ENCODE measurements at regions of chr5 and their contacts with region 1.

Region 1: GRCh38 chr5:40688127-40688761 is 8.5 kb downstream of the PTGER4 start:
- DNase-seq: peak; percentile 81 to 88 (median 84)
- H3K4me3 ChIP-seq: peak overlapping the region in 1 of 2 donors; percentile 46
- H3K4me3 Mint-ChIP-seq: peak overlapping the region; percentile 92 to 100 (median 99)
- H3K27ac ChIP-seq: peak overlapping the region; percentile 59
- H3K27ac Mint-ChIP-seq: peak overlapping the region; percentile 91 to 98 (median 95)
- H3K4me1 ChIP-seq: peaks cover 81% of the 10 kb centered on the region
- H3K4me1 Mint-ChIP-seq: peaks cover 51 to 89% (median 73%) of the 10 kb centered on the region in 4 donors
- H3K27me3 ChIP-seq: no peaks in the 10 kb centered on the region
- H3K27me3 Mint-ChIP-seq: no peaks in the 10 kb centered on the region

Region 2: DNA sequence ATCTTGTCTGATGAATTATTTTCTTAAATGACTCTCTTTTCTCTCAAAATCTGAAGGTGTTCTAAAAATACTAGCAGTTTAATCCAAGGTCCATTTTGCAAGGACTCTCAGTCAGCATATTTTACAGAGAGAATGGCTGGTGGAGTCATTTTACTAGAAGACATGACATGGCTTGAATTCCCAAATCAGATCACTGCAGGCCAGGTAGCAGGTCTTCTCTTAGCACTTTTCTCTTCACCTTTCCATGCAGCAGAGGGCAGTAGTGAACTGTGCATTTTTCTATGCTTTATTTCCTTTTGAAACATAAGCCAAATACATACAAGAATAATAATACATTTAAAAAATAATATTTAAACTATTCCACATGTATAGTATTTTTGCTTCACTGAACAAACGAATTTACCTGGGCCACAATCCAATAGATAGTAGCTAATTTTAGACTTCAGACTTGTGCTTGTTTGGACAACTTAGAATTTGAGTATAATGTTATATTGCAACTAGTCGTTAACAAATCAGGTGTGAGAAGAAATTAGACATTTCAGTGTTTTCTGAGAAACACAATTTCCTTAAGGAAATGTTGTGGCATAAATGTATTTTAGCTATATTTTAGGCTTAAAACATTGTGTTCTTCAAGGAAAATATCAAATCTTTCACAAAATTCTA is 974.1 kb before region 1 on chr5:
- CTCF ChIA-PET with region 1: interaction called, 10 read pairs
- POLR2A ChIA-PET with region 1: no interaction called
- intact Hi-C with region 1: loop called (anchors 1 kb)
- DNase-seq: peak in 4 of 5 donors; percentile 38 to 47 (median 43)
- H3K4me3 ChIP-seq: no peak overlapping the region
- H3K4me3 Mint-ChIP-seq: no peak overlapping the region
- H3K27ac ChIP-seq: no peak overlapping the region
- H3K27ac Mint-ChIP-seq: no peak overlapping the region
- H3K4me1 ChIP-seq: no peaks in the 10 kb centered on the region
- H3K4me1 Mint-ChIP-seq: no peaks in the 10 kb centered on the region
- H3K27me3 ChIP-seq: no peaks in the 10 kb centered on the region
- H3K27me3 Mint-ChIP-seq: peaks cover 0 to 2% of the 10 kb centered on the region in 2 donors

Region 3: GRCh38 chr5:40165794-40166728 is 522.2 kb before region 1 on chr5:
- CTCF ChIA-PET with region 1: interaction called, 9 read pairs
- POLR2A ChIA-PET with region 1: no interaction called
- intact Hi-C with region 1: loop called (anchors 1 kb)
- DNase-seq: peak in 4 of 5 donors; percentile 13 to 33 (median 16)
- H3K4me3 ChIP-seq: no peak overlapping the region
- H3K4me3 Mint-ChIP-seq: no peak overlapping the region
- H3K27ac ChIP-seq: no peak overlapping the region
- H3K27ac Mint-ChIP-seq: no peak overlapping the region
- H3K4me1 ChIP-seq: no peaks in the 10 kb centered on the region
- H3K4me1 Mint-ChIP-seq: peaks cover 0 to 1% (median 0%) of the 10 kb centered on the region in 4 donors
- H3K27me3 ChIP-seq: no peaks in the 10 kb centered on the region
- H3K27me3 Mint-ChIP-seq: no peaks in the 10 kb centered on the region

Region 4: GRCh38 chr5:40391642-40392041 is 296.6 kb before region 1 on chr5:
- CTCF ChIA-PET with region 1: interaction called, 18 read pairs
- POLR2A ChIA-PET with region 1: interaction called, 15 read pairs
- intact Hi-C with region 1: loop called (anchors 1 kb)
- DNase-seq: no peak
- H3K4me3 ChIP-seq: no peak overlapping the region
- H3K4me3 Mint-ChIP-seq: peak overlapping the region in 1 of 8 donors; percentile 6
- H3K27ac ChIP-seq: no peak overlapping the region
- H3K27ac Mint-ChIP-seq: peak overlapping the region in 5 of 7 donors; percentile 17 to 79 (median 63)
- H3K4me1 ChIP-seq: peaks cover 52% of the 10 kb centered on the region
- H3K4me1 Mint-ChIP-seq: peaks cover 42 to 58% (median 46%) of the 10 kb centered on the region in 4 donors
- H3K27me3 ChIP-seq: no peaks in the 10 kb centered on the region
- H3K27me3 Mint-ChIP-seq: no peaks in the 10 kb centered on the region

Region 5: DNA sequence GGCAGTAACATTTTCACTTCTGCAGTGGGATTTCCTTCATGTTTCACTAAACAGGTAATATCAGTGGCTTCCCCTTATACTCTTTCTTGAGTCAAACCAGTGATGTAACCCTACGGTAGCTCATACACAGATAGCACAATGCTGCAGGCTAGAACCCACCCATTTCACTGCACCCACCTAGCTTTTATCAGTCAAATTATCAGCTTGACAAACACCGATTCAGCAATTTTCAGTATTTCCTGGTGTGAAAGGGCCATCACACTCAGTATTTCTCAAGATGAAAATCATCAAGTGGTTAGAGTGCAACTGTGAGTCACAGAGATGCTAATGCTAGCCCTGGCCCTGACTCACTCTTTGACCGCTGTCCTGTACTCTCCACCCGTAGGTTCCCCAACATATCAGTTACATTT is 250.8 kb before region 1 on chr5:
- CTCF ChIA-PET with region 1: interaction called, 15 read pairs
- POLR2A ChIA-PET with region 1: interaction called, 19 read pairs
- intact Hi-C with region 1: loop called (anchors 2 kb)
- DNase-seq: peak in 4 of 5 donors; percentile 10 to 63 (median 22)
- H3K4me3 ChIP-seq: peak overlapping the region in 1 of 2 donors; percentile 17
- H3K4me3 Mint-ChIP-seq: peak overlapping the region in 5 of 8 donors; percentile 5 to 73 (median 58)
- H3K27ac ChIP-seq: peak overlapping the region; percentile 67
- H3K27ac Mint-ChIP-seq: peak overlapping the region; percentile 82 to 97 (median 94)
- H3K4me1 ChIP-seq: peaks cover 48% of the 10 kb centered on the region
- H3K4me1 Mint-ChIP-seq: peaks cover 51 to 76% (median 63%) of the 10 kb centered on the region in 4 donors
- H3K27me3 ChIP-seq: no peaks in the 10 kb centered on the region
- H3K27me3 Mint-ChIP-seq: no peaks in the 10 kb centered on the region

Region 6: DNA sequence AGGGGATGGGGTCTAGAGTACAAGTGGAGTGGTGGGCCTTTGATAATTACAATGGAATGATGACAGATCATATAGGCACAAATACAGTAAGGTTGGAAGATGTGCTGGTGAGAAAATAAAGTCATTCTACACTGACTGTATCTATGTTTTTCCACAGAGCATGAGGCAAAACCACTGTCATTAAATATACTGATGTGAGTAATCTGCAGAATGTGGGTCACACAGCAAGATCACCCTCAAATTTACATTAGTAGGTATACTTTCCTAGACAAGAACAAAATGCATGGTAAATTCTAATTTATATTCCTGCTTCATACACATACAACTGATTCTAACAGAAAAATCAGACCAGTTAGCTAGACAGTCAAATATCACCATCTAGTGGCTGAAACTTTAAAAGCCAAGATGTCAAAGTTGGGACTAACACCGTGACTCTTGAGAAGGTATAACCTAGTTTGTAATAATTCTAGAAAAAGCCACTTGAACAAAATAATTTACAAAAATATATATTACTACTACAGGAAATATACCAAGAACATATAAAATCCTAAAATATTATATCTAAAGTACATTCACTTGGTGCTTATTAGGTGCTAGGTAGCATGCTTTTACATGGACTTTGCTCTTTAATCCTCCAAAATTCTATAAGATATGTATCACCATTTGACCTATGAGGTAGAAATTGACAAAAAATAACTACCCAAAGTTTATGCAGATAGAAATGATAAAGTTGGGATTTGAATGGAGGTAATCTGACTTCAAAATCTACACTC is 48.0 kb after region 1 on chr5:
- CTCF ChIA-PET with region 1: interaction called, 12 read pairs
- POLR2A ChIA-PET with region 1: no interaction called
- intact Hi-C with region 1: loop called (anchors 1 kb)
- DNase-seq: peak in 4 of 5 donors; percentile 51 to 62 (median 57)
- H3K4me3 ChIP-seq: no peak overlapping the region
- H3K4me3 Mint-ChIP-seq: no peak overlapping the region
- H3K27ac ChIP-seq: no peak overlapping the region
- H3K27ac Mint-ChIP-seq: peak overlapping the region in 3 of 7 donors; percentile 23 to 65 (median 24)
- H3K4me1 ChIP-seq: no peaks in the 10 kb centered on the region
- H3K4me1 Mint-ChIP-seq: peaks cover 11 to 20% (median 17%) of the 10 kb centered on the region in 4 donors
- H3K27me3 ChIP-seq: no peaks in the 10 kb centered on the region
- H3K27me3 Mint-ChIP-seq: no peaks in the 10 kb centered on the region

Region 7: GRCh38 chr5:40774623-40775022 is 86.4 kb after region 1 on chr5:
- CTCF ChIA-PET with region 1: no interaction called
- POLR2A ChIA-PET with region 1: no interaction called
- intact Hi-C with region 1: no loop called
- DNase-seq: no peak
- H3K4me3 ChIP-seq: no peak overlapping the region
- H3K4me3 Mint-ChIP-seq: no peak overlapping the region
- H3K27ac ChIP-seq: no peak overlapping the region
- H3K27ac Mint-ChIP-seq: peak overlapping the region in 2 of 7 donors; percentile 1 to 13
- H3K4me1 ChIP-seq: no peaks in the 10 kb centered on the region
- H3K4me1 Mint-ChIP-seq: peaks cover 6 to 18% (median 13%) of the 10 kb centered on the region in 4 donors
- H3K27me3 ChIP-seq: no peaks in the 10 kb centered on the region
- H3K27me3 Mint-ChIP-seq: no peaks in the 10 kb centered on the region

Region 8: DNA sequence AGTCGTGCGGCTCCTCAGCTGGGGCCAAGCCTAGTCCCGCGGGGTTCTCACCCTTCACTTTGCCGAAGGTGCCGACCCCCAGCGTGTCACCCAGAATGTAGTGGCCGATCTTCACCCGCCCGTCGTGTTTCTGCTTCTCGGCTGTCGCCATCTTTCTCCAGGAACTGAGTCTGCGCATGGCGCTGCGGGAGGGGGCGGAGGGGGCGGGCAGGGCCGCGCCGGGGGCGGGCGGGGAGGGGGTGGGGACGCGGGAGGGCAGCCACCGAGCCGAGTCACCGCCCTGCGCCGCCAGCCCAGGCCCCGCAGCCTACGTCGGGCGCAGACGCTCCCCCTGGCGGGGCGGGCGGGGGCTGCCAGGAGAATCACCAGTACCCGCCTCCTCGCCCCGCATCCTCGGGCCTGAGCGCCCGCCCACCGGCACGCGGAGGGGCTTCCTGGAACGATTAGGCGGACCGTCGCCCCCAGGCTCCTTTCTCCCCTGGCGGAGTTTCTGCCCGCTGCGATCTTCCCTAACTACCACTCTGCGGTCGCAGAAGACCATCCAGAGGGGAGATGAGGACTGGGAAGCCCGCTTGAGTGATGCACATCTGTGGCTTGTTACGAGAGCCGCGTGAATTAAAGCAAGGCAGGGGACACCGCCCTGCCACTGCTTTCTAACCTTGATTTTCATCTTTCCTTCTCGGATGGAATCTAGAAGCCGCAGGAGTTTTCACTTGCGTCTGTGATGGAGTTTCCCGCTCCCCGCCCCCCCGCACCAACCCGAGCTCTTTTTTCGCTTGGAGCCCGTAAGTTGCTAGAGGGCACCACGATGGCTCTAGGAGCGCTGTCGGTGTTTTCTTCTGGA is 110.0 kb after region 1 on chr5 and contains the start of gene PRKAA1:
- CTCF ChIA-PET with region 1: no interaction called
- POLR2A ChIA-PET with region 1: no interaction called
- intact Hi-C with region 1: no loop called
- DNase-seq: peak; percentile 88 to 93 (median 91)
- H3K4me3 ChIP-seq: peak within 1 kb of the TSS; percentile 71 to 91
- H3K4me3 Mint-ChIP-seq: peak within 1 kb of the TSS; percentile 91 to 97 (median 94)
- H3K27ac ChIP-seq: peak within 1 kb of the TSS; percentile 91
- H3K27ac Mint-ChIP-seq: peak within 1 kb of the TSS; percentile 91 to 98 (median 95)
- H3K4me1 ChIP-seq: peaks cover 34% of the 10 kb centered on the region
- H3K4me1 Mint-ChIP-seq: peaks cover 27 to 52% (median 42%) of the 10 kb centered on the region in 4 donors
- H3K27me3 ChIP-seq: no peaks in the 10 kb centered on the region
- H3K27me3 Mint-ChIP-seq: no peaks in the 10 kb centered on the region
- total RNA-seq, gene PRKAA1: 113 to 120 TPM